Activated T-helper 2 cell treated with anti-CD3 and anti-CD28 coated beads, Interferon-gamma antibody, Interleukin-2, Interleukin-4, amounts not matched to agents 10 μg/mL and 5 μg/mL and 100 μg/mL, durations not matched to agents 14 hours and 24 hours and 36 hours (primary cell): ENCODE measurements at regions of chr1 and their contacts with region 1.

Region 1: GRCh38 chr1:161201828-161202725 is at the start of gene NDUFS2:
- DNase-seq: peak; percentile 93
- H3K4me3 Mint-ChIP-seq: peak within 1 kb of the TSS; percentile 94
- H3K27ac Mint-ChIP-seq: peak within 1 kb of the TSS; percentile 95
- H3K4me1 Mint-ChIP-seq: peaks cover 41% of the 10 kb centered on the region
- H3K27me3 Mint-ChIP-seq: no peaks in the 10 kb centered on the region
- total RNA-seq, gene NDUFS2: 79.0 and 91.5 TPM in 2 replicates

Region 2: DNA sequence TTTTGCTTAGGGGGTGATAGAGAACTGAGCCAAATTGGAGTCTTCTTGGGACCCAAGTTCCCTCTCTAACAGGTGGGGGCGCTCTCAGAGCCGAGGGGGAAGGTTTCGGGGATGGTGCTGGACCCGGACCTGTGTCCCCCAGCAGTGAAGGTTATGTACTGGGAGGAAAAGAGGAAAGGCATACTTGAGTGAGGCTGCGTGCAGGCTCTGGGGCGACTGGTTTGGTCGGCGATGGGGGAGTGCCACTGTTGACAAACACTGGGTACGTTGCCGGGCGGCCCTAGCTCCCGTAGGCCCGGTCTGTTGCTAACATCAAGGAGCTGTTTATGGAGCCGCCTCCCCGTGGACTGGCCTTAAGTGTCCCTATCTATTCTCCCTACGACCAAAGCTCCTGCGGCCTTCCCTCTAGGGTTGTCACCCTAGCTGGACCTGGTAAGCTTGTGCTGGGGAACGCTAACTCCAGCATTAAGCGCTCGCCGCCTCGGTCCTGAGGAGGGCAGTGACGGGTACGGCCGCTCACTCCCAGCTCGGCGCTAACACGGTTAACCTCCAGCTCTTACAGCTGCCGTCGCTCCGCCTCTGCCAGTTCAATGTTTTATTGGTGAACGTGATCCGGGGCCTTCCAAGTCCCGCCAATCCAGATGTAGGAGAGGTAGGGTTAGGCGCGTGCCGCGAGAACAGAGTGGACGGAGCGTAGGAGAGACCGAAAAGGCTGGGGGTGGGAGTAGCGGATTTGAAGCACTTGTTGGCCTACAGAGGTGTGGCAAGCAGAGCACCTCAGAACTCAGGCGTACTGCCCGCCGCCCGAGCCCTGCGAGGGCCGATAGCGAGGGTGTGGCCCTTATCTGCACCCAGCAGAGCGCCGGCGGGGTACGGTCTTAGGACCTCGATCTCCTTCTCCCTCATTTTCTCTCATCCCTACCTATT is 36.1 kb before region 1 on chr1 and contains the start of gene PPOX:
- intact Hi-C with region 1: loop called (anchors 5 kb)
- DNase-seq: peak; percentile 95
- H3K4me3 Mint-ChIP-seq: peak within 1 kb of the TSS; percentile 92
- H3K27ac Mint-ChIP-seq: peak within 1 kb of the TSS; percentile 96
- H3K4me1 Mint-ChIP-seq: peaks cover 36% of the 10 kb centered on the region
- H3K27me3 Mint-ChIP-seq: no peaks in the 10 kb centered on the region
- total RNA-seq, gene PPOX: 35.6 and 36.5 TPM in 2 replicates

Region 3: DNA sequence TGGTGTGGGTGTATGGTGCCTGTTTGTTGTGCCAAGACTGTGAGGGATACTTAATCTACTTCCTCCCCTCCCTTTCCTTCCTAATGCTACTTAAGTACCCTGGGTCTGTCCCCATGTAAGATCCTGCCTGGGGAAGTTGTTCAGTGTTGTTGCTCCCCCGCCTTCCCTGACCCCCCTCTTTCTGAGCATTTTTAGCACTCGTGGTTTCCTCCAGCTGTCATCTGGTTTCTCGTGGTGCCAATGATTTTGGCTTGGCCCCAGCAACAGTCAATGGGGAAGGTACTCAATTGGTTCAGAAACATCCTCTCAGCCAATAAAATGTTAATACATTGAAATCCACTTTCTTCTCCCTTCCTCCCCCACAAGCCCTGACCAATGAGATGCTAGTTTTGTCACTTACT is 16.8 kb before region 1 on chr1:
- intact Hi-C with region 1: loop called (anchors 1 kb)
- DNase-seq: peak; percentile 78
- H3K4me3 Mint-ChIP-seq: peak overlapping the region; percentile 67
- H3K27ac Mint-ChIP-seq: peak overlapping the region; percentile 98
- H3K4me1 Mint-ChIP-seq: peaks cover 55% of the 10 kb centered on the region
- H3K27me3 Mint-ChIP-seq: no peaks in the 10 kb centered on the region

Region 4: DNA sequence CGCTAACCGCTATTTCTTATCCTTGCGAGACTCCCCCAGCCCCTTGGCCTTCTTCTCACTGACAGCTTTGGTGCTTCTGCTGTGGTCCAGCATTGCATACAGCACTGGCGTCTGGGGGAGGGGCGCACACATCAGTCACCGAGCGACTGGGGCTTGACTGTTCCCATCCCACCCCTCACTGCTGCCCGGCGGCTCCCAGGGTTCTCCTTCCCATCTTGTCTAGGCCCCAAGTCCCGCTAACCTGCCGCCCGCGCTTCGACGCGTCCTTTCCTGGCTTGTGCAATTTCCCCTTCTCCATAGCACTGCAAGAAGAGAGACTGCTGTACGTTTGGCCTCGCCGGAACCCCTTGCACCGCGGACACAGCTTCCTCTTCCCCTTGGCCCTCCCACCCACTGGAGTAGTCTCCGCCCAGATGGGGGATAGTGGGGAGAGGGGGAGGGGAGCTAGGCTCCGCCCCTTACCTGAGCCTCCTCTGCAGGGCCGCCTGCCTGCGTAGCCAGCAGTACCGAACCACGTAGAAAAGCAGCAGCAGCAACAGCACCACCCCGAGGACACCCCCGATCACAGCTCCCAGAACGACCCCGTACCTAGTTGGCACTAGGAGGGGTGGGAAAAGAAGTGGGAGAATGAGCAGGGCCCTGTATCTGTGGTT is 103.9 kb after region 1 on chr1:
- intact Hi-C with region 1: loop called (anchors 5 kb)
- DNase-seq: peak; percentile 79
- H3K4me3 Mint-ChIP-seq: peak overlapping the region; percentile 99
- H3K27ac Mint-ChIP-seq: peak overlapping the region; percentile 90
- H3K4me1 Mint-ChIP-seq: peaks cover 28% of the 10 kb centered on the region
- H3K27me3 Mint-ChIP-seq: no peaks in the 10 kb centered on the region